PC-9 (cell line): ENCODE measurements at regions of chr1 and their contacts with region 1.

Region 1: DNA sequence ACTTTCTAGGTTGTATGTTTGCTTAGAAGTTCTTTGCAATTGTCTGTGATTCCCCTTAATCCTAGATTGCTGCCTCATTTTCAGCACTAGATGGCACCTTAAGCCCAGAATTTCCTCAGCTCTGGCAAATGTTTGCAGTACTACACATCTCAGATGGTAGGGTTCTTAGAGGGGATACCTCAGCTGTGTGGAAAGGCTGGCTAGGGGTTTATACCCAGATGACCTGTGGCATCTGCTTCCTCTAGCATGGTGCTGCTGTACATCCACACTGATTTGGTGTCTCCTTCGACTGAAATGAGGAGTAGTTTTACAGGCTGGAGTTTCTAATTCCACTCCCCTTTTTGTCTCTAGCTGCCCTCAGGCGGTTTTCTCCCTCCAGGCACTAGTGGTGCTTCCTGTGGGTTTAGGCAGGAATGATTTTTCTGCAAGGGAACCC is 23.5 kb downstream of the ASB17 start:
- DNase-seq: peak; percentile 15 to 38
- H3K4me3 ChIP-seq: no peak overlapping the region
- H3K27ac ChIP-seq: no peak overlapping the region
- H3K4me1 ChIP-seq: no peaks in the 10 kb centered on the region
- H3K27me3 ChIP-seq: no peaks in the 10 kb centered on the region; the same call in 1 of the 2 replicates
- CTCF ChIP-seq: peak; percentile 74

Region 2: DNA sequence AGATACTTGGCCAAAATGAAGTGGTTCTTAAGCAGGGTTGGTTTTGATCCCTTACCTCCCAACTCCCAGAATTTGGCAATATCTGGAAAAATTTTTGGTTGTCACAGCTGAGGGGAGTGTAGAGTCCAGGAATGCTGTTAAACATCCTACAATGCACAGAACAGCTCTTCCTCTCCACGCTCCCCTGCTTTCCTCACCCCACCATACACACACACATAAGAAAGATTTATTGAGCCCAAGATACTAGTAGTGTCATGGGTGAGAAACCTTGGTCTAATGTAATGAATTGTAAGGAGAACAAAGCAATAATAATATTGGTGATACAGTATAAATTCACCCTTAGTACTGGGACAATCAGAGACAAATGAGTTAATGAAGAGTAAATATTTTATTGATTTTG is 24.3 kb before region 1 on chr1:
- CTCF ChIA-PET with region 1: interaction called, 17 read pairs
- POLR2A ChIA-PET with region 1: no interaction called
- intact Hi-C with region 1: no loop called
- DNase-seq: no peak
- H3K4me3 ChIP-seq: no peak overlapping the region
- H3K27ac ChIP-seq: no peak overlapping the region
- H3K4me1 ChIP-seq: no peaks in the 10 kb centered on the region
- H3K27me3 ChIP-seq: no peaks in the 10 kb centered on the region
- CTCF ChIP-seq: no peak

Region 3: GRCh38 chr1:75991497-75992114 is 82.9 kb after region 1 on chr1:
- CTCF ChIA-PET with region 1: no interaction called
- POLR2A ChIA-PET with region 1: no interaction called
- intact Hi-C with region 1: loop called (anchors 10 kb)
- DNase-seq: peak; percentile 68 to 69
- H3K4me3 ChIP-seq: no peak overlapping the region
- H3K27ac ChIP-seq: no peak overlapping the region
- H3K4me1 ChIP-seq: no peaks in the 10 kb centered on the region
- H3K27me3 ChIP-seq: peaks cover 6% of the 10 kb centered on the region; the same call in 1 of the 2 replicates
- CTCF ChIP-seq: peak; percentile 96

Region 4: GRCh38 chr1:76154206-76154956 is 245.6 kb after region 1 on chr1:
- CTCF ChIA-PET with region 1: no interaction called
- POLR2A ChIA-PET with region 1: no interaction called
- intact Hi-C with region 1: loop called (anchors 10 kb)
- DNase-seq: peak; percentile 49 to 51
- H3K4me3 ChIP-seq: peak overlapping the region; percentile 37; the same call in 1 of the 2 replicates
- H3K27ac ChIP-seq: no peak overlapping the region
- H3K4me1 ChIP-seq: no peaks in the 10 kb centered on the region
- H3K27me3 ChIP-seq: peaks cover 10% of the 10 kb centered on the region; the same call in 1 of the 2 replicates
- CTCF ChIP-seq: peak; percentile 94

Region 5: GRCh38 chr1:77126307-77126706 is 1217.6 kb after region 1 on chr1:
- CTCF ChIA-PET with region 1: no interaction called
- POLR2A ChIA-PET with region 1: no interaction called
- intact Hi-C with region 1: loop called (anchors 5 kb)
- DNase-seq: peak; percentile 28 to 68
- H3K4me3 ChIP-seq: no peak overlapping the region
- H3K27ac ChIP-seq: no peak overlapping the region
- H3K4me1 ChIP-seq: no peaks in the 10 kb centered on the region
- H3K27me3 ChIP-seq: no peaks in the 10 kb centered on the region
- CTCF ChIP-seq: peak; percentile 89